ENCODE measurements at regions of chr1 and their contacts with region 1.

Region 1: GRCh38 chr1:38026592-38027200 is 14.2 kb downstream of the UTP11 start:
- DNase-seq: no peak
- H3K4me3 Mint-ChIP-seq: no peak overlapping the region
- H3K27ac Mint-ChIP-seq: peak overlapping the region; percentile 31
- H3K4me1 Mint-ChIP-seq: peaks cover 51% of the 10 kb centered on the region
- H3K27me3 Mint-ChIP-seq: no peaks in the 10 kb centered on the region

Region 2: GRCh38 chr1:37901191-37901892 is 125.4 kb before region 1 on chr1:
- intact Hi-C with region 1: no loop called
- DNase-seq: no peak
- H3K4me3 Mint-ChIP-seq: no peak overlapping the region
- H3K27ac Mint-ChIP-seq: peak overlapping the region; percentile 44
- H3K4me1 Mint-ChIP-seq: peaks cover 8% of the 10 kb centered on the region
- H3K27me3 Mint-ChIP-seq: no peaks in the 10 kb centered on the region

Region 3: GRCh38 chr1:37995751-37996345 is 30.8 kb before region 1 on chr1:
- intact Hi-C with region 1: no loop called
- DNase-seq: no peak
- H3K4me3 Mint-ChIP-seq: peak overlapping the region; percentile 54
- H3K27ac Mint-ChIP-seq: peak overlapping the region; percentile 75
- H3K4me1 Mint-ChIP-seq: peaks cover 45% of the 10 kb centered on the region
- H3K27me3 Mint-ChIP-seq: no peaks in the 10 kb centered on the region

Region 4: DNA sequence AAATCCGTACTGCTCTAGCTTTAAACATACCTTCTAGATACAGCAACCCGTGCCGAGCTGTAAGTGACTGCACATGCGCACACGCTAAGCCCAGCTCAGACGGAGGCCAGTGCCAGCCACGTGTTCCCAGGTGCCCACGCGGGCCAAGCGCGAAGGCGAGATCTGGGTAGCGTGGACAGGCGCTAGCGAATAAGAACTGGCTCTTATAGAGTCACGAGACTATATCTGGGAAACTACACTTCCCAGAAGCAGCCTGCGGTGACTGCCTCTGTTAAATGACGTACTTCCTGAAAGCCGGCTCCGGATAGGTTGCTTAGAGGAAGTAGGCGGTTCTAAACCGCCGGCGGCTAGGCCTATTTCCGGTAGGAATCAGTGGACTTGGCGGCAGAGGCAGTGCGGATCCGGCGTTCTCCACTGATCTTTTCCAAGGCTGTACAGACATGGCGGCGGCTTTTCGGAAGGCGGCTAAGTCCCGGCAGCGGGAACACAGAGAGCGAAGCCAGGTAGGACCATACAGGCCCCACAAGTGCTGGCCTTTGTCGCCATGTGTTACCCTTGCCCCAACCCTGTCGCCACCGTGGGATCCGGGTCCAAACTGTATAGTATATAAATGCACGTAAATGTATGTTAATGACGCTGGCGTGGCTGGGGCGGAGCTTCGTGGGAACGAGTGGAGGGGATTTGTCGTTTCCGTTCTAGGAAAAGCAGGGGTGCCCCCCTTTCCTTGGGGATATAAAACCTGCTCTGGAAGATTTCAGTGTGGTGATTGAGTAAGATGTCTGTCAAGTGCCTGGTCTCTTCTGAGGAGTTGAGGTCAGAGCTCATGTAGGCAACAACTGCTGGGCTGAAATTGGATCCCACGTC is 14.1 kb before region 1 on chr1 and contains the start of gene UTP11:
- intact Hi-C with region 1: loop called (anchors 1 kb)
- DNase-seq: peak; percentile 90
- H3K4me3 Mint-ChIP-seq: peak within 1 kb of the TSS; percentile 95
- H3K27ac Mint-ChIP-seq: peak within 1 kb of the TSS; percentile 92
- H3K4me1 Mint-ChIP-seq: peaks cover 45% of the 10 kb centered on the region
- H3K27me3 Mint-ChIP-seq: no peaks in the 10 kb centered on the region
- total RNA-seq, gene UTP11: 78.8 and 79.0 TPM in 2 replicates

Region 5: GRCh38 chr1:38071312-38072256 is 44.9 kb after region 1 on chr1:
- intact Hi-C with region 1: loop called (anchors 1 kb)
- DNase-seq: no peak
- H3K4me3 Mint-ChIP-seq: no peak overlapping the region
- H3K27ac Mint-ChIP-seq: no peak overlapping the region
- H3K4me1 Mint-ChIP-seq: no peaks in the 10 kb centered on the region
- H3K27me3 Mint-ChIP-seq: peaks cover 22% of the 10 kb centered on the region

Region 6: GRCh38 chr1:38565020-38565491 is 538.4 kb after region 1 on chr1:
- intact Hi-C with region 1: loop called (anchors 10 kb)
- DNase-seq: no peak
- H3K4me3 Mint-ChIP-seq: no peak overlapping the region
- H3K27ac Mint-ChIP-seq: no peak overlapping the region
- H3K4me1 Mint-ChIP-seq: peaks cover 43% of the 10 kb centered on the region
- H3K27me3 Mint-ChIP-seq: peaks cover 9% of the 10 kb centered on the region